ENCODE measurements at regions of chr5 and their contacts with region 1.

Region 1: GRCh38 chr5:55994574-55995333 is at the start of gene IL6ST:
- DNase-seq: peak; percentile 98 to 99 (median 99)
- ATAC-seq: peak; percentile 98 to 99 (median 98)
- H3K4me3 ChIP-seq: peak within 1 kb of the TSS; percentile 55 to 95 (median 82)
- H3K27ac ChIP-seq: peak within 1 kb of the TSS; percentile 98 to 100 (median 99)
- H3K4me1 ChIP-seq: peaks cover 3 to 46% (median 28%) of the 10 kb centered on the region in 12 donors
- H3K27me3 ChIP-seq: no peaks in the 10 kb centered on the region
- CTCF ChIP-seq: peak in 8 of 12 donors; percentile 14 to 59 (median 26)
- POLR2A ChIP-seq: peak; percentile 51 to 93
- total RNA-seq, gene IL6ST: 106 to 239 (median 160) TPM

Region 2: DNA sequence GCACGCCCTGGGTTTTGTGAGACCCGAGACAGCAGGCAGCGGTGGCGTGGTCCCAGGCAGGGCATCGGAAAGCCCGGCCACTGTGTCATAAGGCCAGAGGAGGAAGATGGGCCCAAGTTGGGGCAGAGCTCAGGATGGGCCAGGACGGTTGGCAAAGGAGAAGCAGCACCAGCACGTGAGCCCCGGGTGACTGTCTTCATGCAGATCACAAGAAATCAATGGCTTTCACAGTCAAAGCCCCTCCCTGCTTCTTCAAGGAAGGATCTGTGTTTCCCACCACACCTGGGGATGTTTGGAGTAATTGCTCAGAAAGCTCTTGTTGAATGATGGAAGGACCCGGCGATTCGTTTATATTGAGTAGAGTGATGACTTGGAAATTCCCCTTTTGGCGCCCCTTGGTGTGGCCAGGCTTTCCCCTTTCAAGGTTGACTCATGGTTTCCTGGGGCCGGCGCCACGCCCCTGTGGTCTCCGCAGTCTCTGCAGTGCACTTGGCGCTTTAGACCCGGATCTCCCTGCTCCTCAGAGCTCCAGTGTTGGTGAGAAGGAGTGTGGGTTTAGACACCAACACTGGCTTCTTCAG is 91.5 kb before region 1 on chr5:
- intact Hi-C with region 1: no loop called
- DNase-seq: no peak
- ATAC-seq: peak in 3 of 4 donors; percentile 20 to 56 (median 37)
- H3K4me3 ChIP-seq: no peak overlapping the region
- H3K27ac ChIP-seq: no peak overlapping the region
- H3K4me1 ChIP-seq: peaks cover 0 to 14% (median 0%) of the 10 kb centered on the region in 12 donors
- H3K27me3 ChIP-seq: no peaks in the 10 kb centered on the region
- CTCF ChIP-seq: no peak
- POLR2A ChIP-seq: no peak

Region 3: DNA sequence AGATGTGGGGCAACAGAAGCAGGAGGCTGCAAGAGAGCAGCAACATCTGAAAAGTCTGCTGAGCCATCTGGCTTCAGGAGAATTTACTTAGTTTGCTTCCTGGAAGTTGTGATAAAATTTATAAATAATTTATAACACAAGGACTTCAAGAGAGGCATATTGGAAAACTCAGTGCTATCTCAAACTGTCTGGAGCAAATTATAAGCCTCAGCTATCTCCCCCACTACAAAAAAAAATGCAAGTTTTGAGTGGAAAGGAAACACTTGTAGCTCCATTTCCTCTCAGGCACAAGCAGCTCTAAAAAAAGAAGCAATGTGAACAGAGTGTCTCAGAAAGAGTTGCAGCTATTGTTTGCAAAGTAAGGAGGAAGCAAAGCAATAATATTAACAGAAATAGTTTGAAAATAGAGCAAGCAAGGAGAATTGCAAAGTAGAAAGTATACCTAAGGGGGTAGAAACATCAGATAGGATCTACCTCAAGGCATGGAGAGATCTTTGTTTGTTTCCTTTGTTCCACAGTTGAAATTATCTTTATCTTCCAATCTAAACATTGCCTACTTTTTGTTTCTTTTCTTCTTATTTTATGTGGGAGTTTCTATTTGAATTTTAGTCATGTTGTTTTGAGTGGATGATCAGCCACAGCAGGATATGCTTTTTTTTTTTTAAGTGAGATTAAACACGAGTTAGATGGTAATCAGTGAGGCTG is 55.9 kb after region 1 on chr5:
- intact Hi-C with region 1: loop called in 4 of 10 experiments (anchors 2 to 5 kb)
- DNase-seq: no peak
- ATAC-seq: peak; percentile 51 to 70 (median 66)
- H3K4me3 ChIP-seq: peak overlapping the region in 1 of 12 donors; percentile 10
- H3K27ac ChIP-seq: peak overlapping the region in 10 of 12 donors; percentile 7 to 64 (median 42)
- H3K4me1 ChIP-seq: peaks cover 0 to 20% (median 14%) of the 10 kb centered on the region in 12 donors
- H3K27me3 ChIP-seq: no peaks in the 10 kb centered on the region
- CTCF ChIP-seq: no peak
- POLR2A ChIP-seq: no peak

Region 4: DNA sequence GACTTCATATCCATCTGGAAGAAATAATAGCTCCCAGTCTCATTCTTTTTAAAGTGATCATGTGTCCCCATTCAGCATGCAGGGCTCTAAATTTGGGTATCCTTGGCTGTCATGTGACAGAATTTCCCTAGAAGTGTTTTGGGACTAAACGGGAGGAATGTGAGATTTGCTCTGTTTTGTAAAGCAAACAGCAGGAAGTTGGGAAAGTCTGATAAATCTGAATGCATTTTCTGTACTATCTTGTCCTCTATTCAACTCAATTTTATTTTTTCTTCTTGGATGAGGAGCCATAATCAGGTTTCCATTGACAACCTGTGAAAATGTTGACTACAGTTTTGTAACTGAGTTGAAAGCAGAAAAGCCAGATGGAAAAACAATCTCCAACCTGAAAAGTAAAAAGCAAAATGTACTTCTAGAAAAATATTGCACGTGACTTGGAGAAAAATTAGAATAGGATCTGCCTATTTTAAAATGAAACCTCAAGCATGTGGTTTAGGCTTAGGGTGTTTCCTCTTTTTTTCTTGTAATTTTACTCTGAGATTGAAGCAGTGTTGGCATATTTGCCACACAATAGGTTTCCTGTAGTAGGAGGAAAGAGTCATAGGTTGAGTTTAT is 76.2 kb after region 1 on chr5:
- intact Hi-C with region 1: loop called in 2 of 10 experiments (anchors 1 to 5 kb)
- DNase-seq: peak in 1 of 5 donors; percentile 17
- ATAC-seq: peak in 2 of 4 donors; percentile 15 to 57
- H3K4me3 ChIP-seq: peak overlapping the region in 2 of 12 donors; percentile 5 to 18
- H3K27ac ChIP-seq: peak overlapping the region; percentile 31 to 86 (median 64)
- H3K4me1 ChIP-seq: peaks cover 0 to 52% (median 26%) of the 10 kb centered on the region in 12 donors
- H3K27me3 ChIP-seq: no peaks in the 10 kb centered on the region
- CTCF ChIP-seq: no peak
- POLR2A ChIP-seq: no peak

Region 5: GRCh38 chr5:56190497-56190896 is 195.7 kb after region 1 on chr5:
- intact Hi-C with region 1: loop called in 1 of 10 experiments (anchors 5 kb)
- DNase-seq: peak in 4 of 5 donors; percentile 43 to 68 (median 54)
- ATAC-seq: peak in 3 of 4 donors; percentile 31 to 64 (median 52)
- H3K4me3 ChIP-seq: no peak overlapping the region
- H3K27ac ChIP-seq: peak overlapping the region in 2 of 12 donors; percentile 48 to 53
- H3K4me1 ChIP-seq: peaks cover 0 to 25% (median 0%) of the 10 kb centered on the region in 12 donors
- H3K27me3 ChIP-seq: no peaks in the 10 kb centered on the region
- CTCF ChIP-seq: no peak
- POLR2A ChIP-seq: no peak